ENCODE measurements at regions of chr6 and their contacts with region 1.

Region 1: GRCh38 chr6:21593412-21593926 is at the start of gene SOX4:
- DNase-seq: peak; percentile 99
- H3K4me3 Mint-ChIP-seq: no peak within 1 kb of the TSS
- H3K27ac Mint-ChIP-seq: no peak within 1 kb of the TSS
- H3K4me1 Mint-ChIP-seq: peaks cover 2% of the 10 kb centered on the region
- H3K27me3 Mint-ChIP-seq: no peaks in the 10 kb centered on the region
- CTCF ChIP-seq: no peak
- total RNA-seq, gene SOX4: 109 and 120 TPM in 2 replicates

Region 2: GRCh38 chr6:20877008-20877937 is 716.2 kb before region 1 on chr6:
- CTCF ChIA-PET with region 1: interaction called, 73 read pairs
- intact Hi-C with region 1: loop called (anchors 1 kb)
- DNase-seq: peak; percentile 95
- H3K4me3 Mint-ChIP-seq: peak overlapping the region; percentile 45
- H3K27ac Mint-ChIP-seq: peak overlapping the region; percentile 96
- H3K4me1 Mint-ChIP-seq: peaks cover 93% of the 10 kb centered on the region
- H3K27me3 Mint-ChIP-seq: no peaks in the 10 kb centered on the region
- CTCF ChIP-seq: no peak

Region 3: DNA sequence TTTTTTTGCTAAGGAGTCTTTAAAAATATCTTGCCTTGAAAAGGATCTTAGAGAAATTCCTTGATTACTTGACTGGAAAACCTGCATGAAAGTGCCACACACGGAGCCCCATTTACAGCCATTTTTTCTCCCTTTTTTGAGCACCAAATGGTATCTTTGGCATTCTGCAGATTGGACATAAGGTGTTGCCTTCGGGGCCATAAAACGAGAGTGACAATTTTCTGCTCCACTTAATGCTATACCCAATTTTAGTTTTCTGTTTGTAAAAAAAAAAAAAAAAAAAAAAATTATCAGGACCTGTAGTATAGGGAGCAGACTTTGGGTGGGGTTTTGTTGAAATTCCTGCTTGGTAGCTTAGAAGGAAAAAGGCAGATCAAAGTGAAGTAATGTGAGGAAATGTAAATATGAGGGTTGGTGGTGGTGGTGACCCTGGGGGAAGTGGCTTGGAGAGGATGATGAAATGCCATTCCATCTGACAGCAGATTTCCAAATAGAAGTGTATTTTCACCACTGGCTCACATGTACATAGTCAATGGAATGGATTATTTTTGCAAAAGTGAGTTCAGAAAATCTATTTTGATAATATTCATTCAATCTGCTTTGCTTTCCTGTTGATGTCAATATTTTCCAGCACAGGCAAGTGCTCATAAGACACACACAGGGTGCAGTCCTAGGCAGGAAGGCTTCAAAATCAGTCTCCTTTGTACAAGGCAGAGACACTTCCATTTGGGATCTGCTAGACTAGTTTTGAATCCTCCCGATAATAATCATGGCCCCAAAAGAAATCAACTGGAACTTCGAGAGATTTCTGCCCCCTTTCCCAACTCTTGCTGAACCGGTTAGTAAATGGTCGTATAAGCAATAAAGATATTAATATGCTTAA is 211.9 kb before region 1 on chr6:
- CTCF ChIA-PET with region 1: interaction called, 4 read pairs
- intact Hi-C with region 1: loop called (anchors 10 kb)
- DNase-seq: peak; percentile 74
- H3K4me3 Mint-ChIP-seq: no peak overlapping the region
- H3K27ac Mint-ChIP-seq: peak overlapping the region; percentile 81
- H3K4me1 Mint-ChIP-seq: peaks cover 30% of the 10 kb centered on the region
- H3K27me3 Mint-ChIP-seq: no peaks in the 10 kb centered on the region
- CTCF ChIP-seq: no peak

Region 4: DNA sequence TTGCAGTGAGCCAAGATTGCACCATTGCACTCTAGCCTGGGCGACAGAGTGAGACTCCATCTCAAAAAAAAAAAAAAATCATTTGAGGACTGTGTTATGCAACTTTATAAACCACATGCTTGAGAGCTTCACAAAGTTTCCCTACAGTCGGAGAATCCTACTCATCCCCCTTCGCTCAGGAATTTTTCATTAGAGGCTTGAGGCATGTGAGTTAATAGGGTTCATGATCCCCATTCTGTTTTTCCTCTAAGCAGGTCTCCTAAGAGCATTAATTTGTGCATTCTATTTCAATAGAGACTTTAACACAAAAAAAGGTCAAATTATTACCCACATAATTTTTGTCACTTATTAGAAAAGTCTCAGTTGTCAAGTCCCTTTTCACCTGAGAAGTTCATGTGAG is 103.6 kb before region 1 on chr6:
- CTCF ChIA-PET with region 1: no interaction called
- intact Hi-C with region 1: no loop called
- DNase-seq: no peak
- H3K4me3 Mint-ChIP-seq: no peak overlapping the region
- H3K27ac Mint-ChIP-seq: no peak overlapping the region
- H3K4me1 Mint-ChIP-seq: no peaks in the 10 kb centered on the region
- H3K27me3 Mint-ChIP-seq: no peaks in the 10 kb centered on the region
- CTCF ChIP-seq: no peak

Region 5: GRCh38 chr6:21615504-21615903 is 22.0 kb after region 1 on chr6:
- CTCF ChIA-PET with region 1: no interaction called
- intact Hi-C with region 1: no loop called
- DNase-seq: no peak
- H3K4me3 Mint-ChIP-seq: no peak overlapping the region
- H3K27ac Mint-ChIP-seq: no peak overlapping the region
- H3K4me1 Mint-ChIP-seq: peaks cover 15% of the 10 kb centered on the region
- H3K27me3 Mint-ChIP-seq: no peaks in the 10 kb centered on the region
- CTCF ChIP-seq: no peak

Region 6: DNA sequence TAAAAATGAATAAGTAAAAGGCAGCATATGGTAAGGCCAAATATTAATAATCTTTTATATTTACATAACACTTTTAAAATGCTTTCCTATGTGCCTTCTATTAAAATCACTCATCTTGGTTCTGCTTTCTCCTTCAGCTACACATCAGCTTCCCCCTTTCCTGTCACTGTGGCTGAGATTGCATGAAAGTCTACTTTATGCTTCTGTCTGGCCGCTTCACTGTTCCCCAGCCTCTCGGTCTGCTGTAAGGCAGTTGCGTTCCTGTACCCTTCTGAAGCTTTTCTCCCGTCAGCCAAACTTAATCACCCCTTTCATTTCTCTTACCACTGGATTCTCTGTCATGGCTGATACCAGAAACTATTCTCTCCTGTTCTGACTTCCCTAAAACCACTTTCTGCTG is 34.7 kb after region 1 on chr6:
- CTCF ChIA-PET with region 1: no interaction called
- intact Hi-C with region 1: no loop called
- DNase-seq: no peak
- H3K4me3 Mint-ChIP-seq: no peak overlapping the region
- H3K27ac Mint-ChIP-seq: no peak overlapping the region
- H3K4me1 Mint-ChIP-seq: no peaks in the 10 kb centered on the region
- H3K27me3 Mint-ChIP-seq: no peaks in the 10 kb centered on the region
- CTCF ChIP-seq: no peak

Region 7: GRCh38 chr6:21826023-21826422 is 232.6 kb after region 1 on chr6:
- CTCF ChIA-PET with region 1: interaction called, 4 read pairs
- intact Hi-C with region 1: loop called (anchors 5 kb)
- DNase-seq: peak; percentile 62
- H3K4me3 Mint-ChIP-seq: peak overlapping the region; percentile 44
- H3K27ac Mint-ChIP-seq: peak overlapping the region; percentile 74
- H3K4me1 Mint-ChIP-seq: peaks cover 47% of the 10 kb centered on the region
- H3K27me3 Mint-ChIP-seq: no peaks in the 10 kb centered on the region
- CTCF ChIP-seq: no peak

Region 8: GRCh38 chr6:22145823-22146677 is 552.6 kb after region 1 on chr6:
- CTCF ChIA-PET with region 1: interaction called, 3 read pairs
- intact Hi-C with region 1: loop called (anchors 10 kb)
- DNase-seq: no peak
- H3K4me3 Mint-ChIP-seq: no peak overlapping the region
- H3K27ac Mint-ChIP-seq: no peak overlapping the region
- H3K4me1 Mint-ChIP-seq: peaks cover 20% of the 10 kb centered on the region
- H3K27me3 Mint-ChIP-seq: no peaks in the 10 kb centered on the region
- CTCF ChIP-seq: no peak

Region 9: DNA sequence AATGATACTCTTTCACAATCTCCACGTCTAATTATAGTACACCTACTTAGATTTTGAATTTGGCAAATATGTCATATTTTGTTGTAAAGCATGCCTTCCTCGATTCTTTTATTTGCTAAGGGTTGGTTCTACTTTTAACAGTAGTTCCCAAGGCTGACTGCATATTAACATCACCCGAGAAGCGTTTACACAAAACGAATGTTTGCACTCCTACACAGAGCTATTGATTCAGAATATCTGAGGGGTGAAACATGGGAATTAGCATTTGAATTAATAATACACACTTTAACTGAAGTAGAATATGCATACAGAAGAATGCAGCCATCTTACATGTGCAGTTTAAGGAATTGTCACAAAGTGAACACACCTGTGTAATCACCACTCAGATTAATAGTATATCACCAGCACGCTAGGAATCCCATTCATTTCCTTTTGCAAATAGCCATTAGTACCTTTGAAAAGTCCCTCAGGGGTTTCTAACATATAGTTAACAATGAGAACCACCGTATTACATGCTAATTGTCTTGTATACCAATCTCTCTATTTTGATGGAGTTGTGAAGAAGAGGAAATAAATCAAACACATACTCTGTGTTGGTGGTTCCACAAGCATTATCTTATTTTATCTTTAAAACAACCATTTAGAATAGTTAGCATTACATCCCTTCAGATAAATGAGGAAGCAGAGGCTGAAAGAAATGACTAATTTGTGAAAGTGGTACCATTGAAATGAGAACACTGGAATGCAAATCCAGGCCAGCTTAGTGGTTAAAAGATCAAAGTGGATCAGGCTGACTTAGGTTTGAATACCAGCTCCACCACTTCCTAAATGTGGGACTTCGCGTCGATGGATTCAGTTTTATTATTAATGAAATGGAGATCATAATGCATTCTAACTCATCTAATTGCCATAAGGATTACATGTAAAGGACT is 1293.4 kb after region 1 on chr6:
- CTCF ChIA-PET with region 1: no interaction called
- intact Hi-C with region 1: loop called (anchors 5 kb)
- DNase-seq: peak; percentile 43
- H3K4me3 Mint-ChIP-seq: peak overlapping the region; percentile 17
- H3K27ac Mint-ChIP-seq: peak overlapping the region; percentile 71
- H3K4me1 Mint-ChIP-seq: peaks cover 50% of the 10 kb centered on the region
- H3K27me3 Mint-ChIP-seq: no peaks in the 10 kb centered on the region
- CTCF ChIP-seq: no peak

Measured in Calu3 (cell line).